Prostate gland (tissue), 2 donors: ENCODE measurements at regions of chr9 and their contacts with region 1.

Region 1: DNA sequence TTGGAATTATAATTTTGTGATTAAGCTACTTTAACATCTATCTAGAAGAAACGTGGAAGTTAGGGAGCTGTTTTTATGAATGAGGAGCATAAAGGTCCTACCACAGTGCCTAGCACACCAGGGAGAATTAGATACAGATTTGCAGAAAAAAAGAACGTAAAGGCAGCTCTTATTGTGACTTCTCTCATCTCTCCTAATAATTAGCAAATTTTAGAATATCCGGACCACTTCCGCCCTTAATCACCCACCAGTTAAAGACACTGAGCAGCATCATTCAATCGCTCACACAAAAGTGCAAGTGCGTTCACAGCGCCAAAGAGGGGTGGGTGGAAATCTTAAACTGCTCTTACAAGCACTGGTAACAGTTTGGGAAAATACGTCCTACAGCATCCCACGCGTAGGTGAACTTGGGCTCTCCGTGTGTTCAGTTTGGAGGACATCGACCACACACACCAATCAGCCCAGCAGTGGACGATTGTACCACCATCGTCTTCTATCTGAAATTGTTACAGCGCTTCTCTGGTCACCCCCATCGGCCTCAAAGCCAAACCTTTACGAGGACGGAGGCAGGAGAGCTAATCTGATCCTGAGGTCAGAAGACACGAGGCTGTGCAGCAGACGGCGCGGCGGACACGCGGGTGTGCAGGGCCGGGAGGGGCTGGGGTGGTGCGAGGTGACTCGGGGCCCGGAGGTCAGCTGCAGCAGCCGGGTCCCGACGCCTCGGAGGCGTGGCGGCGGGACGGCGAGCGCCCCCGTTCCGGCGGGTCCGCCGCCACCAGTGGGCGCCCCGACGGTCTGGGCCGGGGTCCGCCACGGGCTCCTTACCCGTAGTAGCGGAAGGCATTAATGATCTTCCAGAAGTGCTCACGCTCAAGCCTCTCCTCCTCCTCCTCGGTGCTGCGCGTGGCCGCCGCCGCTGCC is 646 bp downstream of the CARNMT1 start:
- DNase-seq: peak; percentile 40
- H3K4me3 ChIP-seq: peak overlapping the region; percentile 91 to 93
- H3K27ac ChIP-seq: peak overlapping the region; percentile 95 to 96
- H3K4me1 ChIP-seq: no peaks in the 10 kb centered on the region
- H3K27me3 ChIP-seq: no peaks in the 10 kb centered on the region
- CTCF ChIP-seq: peak in 1 of 4 experiments; percentile 5
- POLR2A ChIP-seq: no peak

Region 2: GRCh38 chr9:74952281-74953151 is 74.9 kb before region 1 on chr9 and contains the start of gene C9orf40:
- intact Hi-C with region 1: loop called (anchors 2 kb)
- DNase-seq: peak; percentile 84
- H3K4me3 ChIP-seq: peak within 1 kb of the TSS; percentile 75 to 91
- H3K27ac ChIP-seq: peak within 1 kb of the TSS; percentile 91 to 94
- H3K4me1 ChIP-seq: no peaks in the 10 kb centered on the region
- H3K27me3 ChIP-seq: no peaks in the 10 kb centered on the region
- CTCF ChIP-seq: peak; percentile 49 to 86 (median 76)
- POLR2A ChIP-seq: peak; percentile 4
- total RNA-seq, gene C9orf40: 2.5 to 4.4 TPM

Region 3: DNA sequence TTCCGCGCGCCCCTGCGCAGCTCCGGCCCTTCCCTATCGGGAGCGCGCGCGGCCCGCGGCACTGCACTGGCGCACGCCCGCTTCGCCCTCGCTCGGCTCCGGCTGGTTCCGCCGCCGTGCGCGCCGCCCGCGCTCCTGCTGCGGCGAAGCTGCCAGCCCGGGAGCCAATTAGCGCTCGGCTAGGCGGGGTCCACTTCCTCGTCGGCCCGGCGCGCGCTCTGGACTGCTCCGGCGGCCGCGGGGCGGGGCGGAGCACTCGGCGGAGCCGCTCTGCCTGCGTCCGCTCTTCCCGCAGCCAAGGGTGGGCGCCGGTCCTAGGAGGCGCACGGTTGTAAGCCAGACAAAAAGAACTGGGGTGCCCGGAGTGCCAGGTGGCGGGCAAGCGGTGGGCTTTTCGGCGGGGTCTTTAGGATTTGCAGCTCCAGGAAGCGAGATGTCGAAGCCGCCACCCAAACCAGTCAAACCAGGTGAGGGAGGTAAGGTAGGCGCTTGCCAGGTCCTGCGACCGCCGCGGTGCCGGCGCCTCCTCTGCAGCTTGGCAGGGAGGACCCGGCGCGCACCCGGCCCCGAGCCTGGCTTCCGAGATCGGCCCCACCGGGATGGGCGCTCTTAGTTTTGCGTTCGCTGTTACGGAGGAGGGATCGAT is 60.9 kb after region 1 on chr9 and contains the start of gene OSTF1:
- intact Hi-C with region 1: loop called (anchors 1 kb)
- DNase-seq: peak; percentile 95
- H3K4me3 ChIP-seq: peak within 1 kb of the TSS; percentile 77 to 82
- H3K27ac ChIP-seq: peak within 1 kb of the TSS; percentile 97 to 99
- H3K4me1 ChIP-seq: no peaks in the 10 kb centered on the region
- H3K27me3 ChIP-seq: no peaks in the 10 kb centered on the region
- CTCF ChIP-seq: peak in 1 of 4 experiments; percentile 7
- POLR2A ChIP-seq: peak; percentile 92
- total RNA-seq, gene OSTF1: 24.5 to 35.8 TPM